Activated CD4-positive, alpha-beta memory T cell treated with anti-CD3 and anti-CD28 coated beads for 36 hours (primary cell): ENCODE measurements at regions of chr17 and their contacts with region 1.

Region 1: DNA sequence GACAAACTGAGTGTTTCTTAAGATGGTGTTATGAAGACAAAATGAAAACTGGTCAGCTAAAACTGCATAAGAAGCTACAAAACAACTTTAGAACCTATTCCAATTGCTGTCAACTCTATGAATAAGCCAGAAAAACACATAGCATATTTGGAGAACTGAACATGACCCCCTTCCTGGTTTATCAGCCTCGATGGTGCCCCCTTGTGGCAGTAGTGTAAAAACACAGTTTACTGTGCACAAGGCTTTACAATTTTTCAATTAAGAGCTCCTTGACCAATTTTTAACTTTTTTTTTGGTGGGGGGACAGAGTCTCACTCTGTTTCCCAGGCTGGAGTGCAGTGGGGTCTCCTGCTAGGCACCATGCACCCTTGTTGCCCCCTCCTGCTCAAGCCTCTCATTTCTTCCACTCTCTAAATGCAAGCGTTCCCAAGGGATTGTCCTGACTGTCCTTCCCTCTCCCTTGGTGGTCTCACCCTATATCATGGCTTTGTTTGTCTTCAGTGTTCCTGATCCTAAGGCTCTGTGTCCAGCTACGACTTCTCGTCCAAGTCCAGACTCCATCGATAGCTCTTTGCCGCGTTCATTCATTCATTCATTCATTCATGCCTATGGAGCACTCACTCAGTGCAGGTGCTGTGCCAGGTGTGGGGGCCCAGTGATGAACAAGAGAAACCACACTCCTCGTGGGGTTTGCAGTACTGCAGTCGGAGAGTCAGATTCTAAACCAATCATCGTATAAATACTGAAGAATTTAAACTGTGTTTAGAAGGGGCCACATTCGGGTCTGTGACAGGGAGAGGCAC is 7.5 kb downstream of the EIF1 start:
- DNase-seq: peak; percentile 79
- H3K4me3 Mint-ChIP-seq: no peak overlapping the region
- H3K27ac Mint-ChIP-seq: no peak overlapping the region
- H3K4me1 Mint-ChIP-seq: peaks cover 22% of the 10 kb centered on the region
- H3K27me3 Mint-ChIP-seq: no peaks in the 10 kb centered on the region

Region 2: DNA sequence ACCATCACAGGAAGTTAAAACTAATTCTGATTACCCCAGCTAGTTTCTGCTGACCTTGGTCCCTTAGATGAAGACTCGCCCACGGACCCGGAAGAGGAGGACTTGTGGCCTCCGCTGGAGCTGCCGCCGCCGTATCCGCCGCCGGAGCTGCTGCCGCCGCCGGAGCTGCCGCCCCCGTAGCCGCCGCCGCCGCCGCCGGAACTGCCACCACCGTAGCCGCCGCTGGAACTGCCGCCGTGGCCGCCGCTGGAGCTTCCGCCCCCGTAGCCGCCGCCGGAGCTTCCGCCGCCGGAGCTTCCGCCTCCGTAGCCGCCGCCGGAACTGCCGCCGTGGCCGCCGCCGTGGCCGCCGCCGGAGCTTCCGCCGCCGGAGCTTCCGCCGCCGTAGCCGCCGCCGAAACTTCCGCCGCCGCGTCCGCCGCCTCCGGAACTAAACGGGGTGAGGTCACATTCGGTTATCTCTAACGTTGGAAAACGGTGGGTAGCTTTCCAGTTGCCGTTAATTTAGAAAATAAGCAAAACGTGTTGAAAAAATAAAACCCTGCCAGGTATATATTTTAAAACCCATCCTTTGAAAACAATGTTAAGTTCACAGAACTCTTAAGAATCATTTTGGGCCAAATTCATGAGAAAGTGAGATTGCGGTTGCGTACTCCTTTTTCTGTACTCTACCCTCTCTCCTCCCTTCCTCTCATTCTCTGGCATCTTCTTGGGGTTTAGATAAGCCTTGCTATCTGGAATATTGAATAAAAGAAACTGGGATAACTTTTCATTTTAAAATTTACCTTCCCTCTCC is 877.2 kb before region 1 on chr17:
- CTCF ChIA-PET with region 1: no interaction called
- POLR2A ChIA-PET with region 1: no interaction called
- intact Hi-C with region 1: no loop called
- DNase-seq: peak; percentile 91
- H3K4me3 Mint-ChIP-seq: peak overlapping the region; percentile 87
- H3K27ac Mint-ChIP-seq: peak overlapping the region; percentile 94
- H3K4me1 Mint-ChIP-seq: peaks cover 18% of the 10 kb centered on the region
- H3K27me3 Mint-ChIP-seq: peaks cover 7% of the 10 kb centered on the region

Region 3: GRCh38 chr17:41678907-41679739 is 17.0 kb before region 1 on chr17:
- CTCF ChIA-PET with region 1: interaction called, 120 read pairs
- POLR2A ChIA-PET with region 1: interaction called, 184 read pairs
- intact Hi-C with region 1: no loop called
- DNase-seq: peak; percentile 81
- H3K4me3 Mint-ChIP-seq: peak overlapping the region; percentile 79
- H3K27ac Mint-ChIP-seq: peak overlapping the region; percentile 97
- H3K4me1 Mint-ChIP-seq: peaks cover 41% of the 10 kb centered on the region
- H3K27me3 Mint-ChIP-seq: no peaks in the 10 kb centered on the region

Region 4: GRCh38 chr17:41821776-41822175 is 125.6 kb after region 1 on chr17:
- CTCF ChIA-PET with region 1: no interaction called
- POLR2A ChIA-PET with region 1: no interaction called
- intact Hi-C with region 1: no loop called
- DNase-seq: no peak
- H3K4me3 Mint-ChIP-seq: no peak overlapping the region
- H3K27ac Mint-ChIP-seq: no peak overlapping the region
- H3K4me1 Mint-ChIP-seq: no peaks in the 10 kb centered on the region
- H3K27me3 Mint-ChIP-seq: peaks cover 1% of the 10 kb centered on the region